ENCODE measurements at regions of chr4 and their contacts with region 1.

Region 1: GRCh38 chr4:102344954-102345794 is at the start of gene SLC39A8:
- DNase-seq: peak; percentile 78 to 79
- ATAC-seq: peak; percentile 93 to 97 (median 95)
- H3K4me3 ChIP-seq: peak within 1 kb of the TSS; percentile 25 to 80 (median 62)
- H3K27ac ChIP-seq: peak within 1 kb of the TSS in 9 of 10 donors; percentile 3 to 94 (median 56)
- H3K4me1 ChIP-seq: peaks cover 0 to 48% (median 10%) of the 10 kb centered on the region in 9 donors
- H3K27me3 ChIP-seq: peaks cover 0 to 11% (median 0%) of the 10 kb centered on the region in 7 donors
- CTCF ChIP-seq: peak; percentile 54 to 84 (median 81)
- total RNA-seq, gene SLC39A8: 1.00 to 11.0 (median 3.0) TPM

Region 2: GRCh38 chr4:102420569-102421221 is 75.5 kb after region 1 on chr4:
- intact Hi-C with region 1: loop called in 2 of 10 experiments (anchors 5 to 10 kb)
- DNase-seq: no peak
- ATAC-seq: no peak
- H3K4me3 ChIP-seq: no peak overlapping the region
- H3K27ac ChIP-seq: no peak overlapping the region
- H3K4me1 ChIP-seq: no peaks in the 10 kb centered on the region
- H3K27me3 ChIP-seq: no peaks in the 10 kb centered on the region
- CTCF ChIP-seq: peak in 4 of 9 donors; percentile 12 to 29 (median 22)

Region 3: DNA sequence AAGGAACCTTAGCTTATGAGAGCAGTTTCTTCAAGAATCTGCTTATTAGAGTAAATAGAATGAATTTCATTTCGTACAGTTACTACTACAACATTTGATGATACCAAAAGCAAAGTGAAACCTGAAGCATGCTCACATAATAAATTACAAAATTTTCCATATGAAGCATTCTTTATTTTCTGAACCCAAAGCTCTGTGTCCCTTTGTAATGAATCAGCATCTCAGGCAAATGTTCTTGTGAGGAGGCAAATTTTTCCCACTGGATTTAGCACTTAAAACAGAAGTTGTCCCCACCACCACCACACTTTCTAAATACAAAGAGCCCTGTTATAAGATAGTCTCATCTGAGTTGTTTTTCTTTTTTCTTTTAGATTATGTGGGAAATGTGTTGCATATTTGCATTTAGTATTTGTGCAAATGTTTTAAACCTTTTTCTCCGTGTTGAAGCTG is 85.3 kb after region 1 on chr4:
- intact Hi-C with region 1: loop called in 2 of 10 experiments (anchors 5 to 10 kb)
- DNase-seq: no peak
- ATAC-seq: peak in 2 of 8 donors; percentile 32 to 34
- H3K4me3 ChIP-seq: peak overlapping the region; percentile 37 to 66 (median 58)
- H3K27ac ChIP-seq: peak overlapping the region in 8 of 10 donors; percentile 34 to 86 (median 62)
- H3K4me1 ChIP-seq: peaks cover 0 to 18% (median 0%) of the 10 kb centered on the region in 9 donors
- H3K27me3 ChIP-seq: no peaks in the 10 kb centered on the region
- CTCF ChIP-seq: no peak